Transverse colon (tissue), 4 donors: ENCODE measurements at regions of chr9 and their contacts with region 1.

Region 1: GRCh38 chr9:117034862-117035261 is 347.8 kb downstream of the TRIM32 start:
- DNase-seq: no peak
- H3K4me3 ChIP-seq: no peak overlapping the region
- H3K27ac ChIP-seq: no peak overlapping the region
- H3K4me1 ChIP-seq: no peaks in the 10 kb centered on the region
- H3K27me3 ChIP-seq: no peaks in the 10 kb centered on the region
- CTCF ChIP-seq: no peak
- EP300 ChIP-seq: no peak
- POLR2A ChIP-seq: no peak

Region 2: DNA sequence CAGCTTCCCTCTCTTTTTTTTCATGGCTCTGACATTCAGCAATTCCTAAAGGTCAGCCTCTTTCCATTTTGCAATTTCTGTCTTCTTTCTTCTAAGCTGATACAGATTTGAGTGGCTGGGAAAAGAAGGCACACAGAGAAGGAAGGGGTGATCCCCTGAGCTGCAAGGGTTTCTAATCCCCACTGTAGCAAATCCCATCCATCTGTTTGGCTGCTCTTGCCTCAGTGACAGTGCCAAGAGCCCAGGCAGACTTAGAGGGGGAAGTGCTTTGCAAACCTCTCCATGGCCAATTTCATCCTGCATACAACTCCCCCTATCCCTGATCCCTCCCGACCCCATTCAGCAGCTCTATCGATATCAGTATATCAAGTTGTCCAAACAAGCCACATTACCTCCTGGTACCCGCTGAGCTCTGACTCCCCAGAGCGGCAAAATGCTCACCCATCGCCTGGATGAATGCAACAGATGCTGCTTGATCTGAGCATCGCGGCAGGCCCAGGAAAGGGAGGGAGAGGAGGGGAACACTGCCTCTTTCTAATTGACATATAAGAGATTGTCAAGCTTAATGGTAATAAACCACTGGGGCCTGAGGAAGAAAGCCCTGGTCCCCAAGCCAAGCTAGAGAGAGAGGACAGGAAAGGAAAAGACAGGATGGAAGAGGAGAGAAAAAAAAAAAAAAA is 111.1 kb after region 1 on chr9:
- in situ Hi-C with region 1: loop called in 2 of 4 experiments (anchors 25 kb)
- intact Hi-C with region 1: no loop called
- DNase-seq: no peak
- H3K4me3 ChIP-seq: no peak overlapping the region
- H3K27ac ChIP-seq: no peak overlapping the region
- H3K4me1 ChIP-seq: no peaks in the 10 kb centered on the region
- H3K27me3 ChIP-seq: no peaks in the 10 kb centered on the region
- CTCF ChIP-seq: no peak
- EP300 ChIP-seq: no peak
- POLR2A ChIP-seq: no peak